ENCODE measurements at regions of chr5 and their contacts with region 1.

Region 1: DNA sequence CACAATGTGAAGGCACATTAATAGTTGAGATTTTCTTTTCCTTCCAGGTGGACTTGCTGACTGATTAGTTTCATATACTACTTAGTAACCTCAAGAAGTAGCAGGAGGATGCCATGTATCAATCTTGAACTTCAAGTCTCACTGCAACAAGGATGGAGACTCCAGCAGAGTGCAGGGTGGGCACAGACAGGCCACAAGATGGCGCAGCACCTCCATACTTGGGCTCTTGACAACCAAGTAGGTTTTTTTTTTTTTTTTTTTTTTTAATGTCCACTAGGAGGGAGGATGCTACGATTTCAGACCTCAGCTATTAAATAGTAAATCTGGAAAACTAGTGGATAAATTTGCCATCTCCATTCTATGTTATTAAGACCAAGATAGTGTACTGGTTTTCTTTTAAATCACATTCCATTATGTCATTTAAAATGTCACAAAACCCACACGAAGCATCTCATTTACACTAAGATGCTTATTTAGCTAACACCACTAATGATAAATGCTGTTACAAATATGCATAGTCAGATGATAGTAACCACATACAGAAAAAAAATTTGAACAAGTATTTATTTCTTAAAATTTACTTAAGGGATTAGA is 58.6 kb downstream of the IL6ST start:
- DNase-seq: peak; percentile 82
- H3K4me3 ChIP-seq: no peak overlapping the region
- H3K27ac ChIP-seq: no peak overlapping the region
- H3K27me3 ChIP-seq: no peaks in the 10 kb centered on the region
- CTCF ChIP-seq: peak; percentile 96

Region 2: GRCh38 chr5:55585206-55585610 is 351.0 kb before region 1 on chr5:
- CTCF ChIA-PET with region 1: interaction called, 10 read pairs
- POLR2A ChIA-PET with region 1: no interaction called
- DNase-seq: no peak
- H3K4me3 ChIP-seq: no peak overlapping the region
- H3K27ac ChIP-seq: no peak overlapping the region
- H3K27me3 ChIP-seq: no peaks in the 10 kb centered on the region
- CTCF ChIP-seq: no peak

Region 3: GRCh38 chr5:55908804-55909203 is 27.4 kb before region 1 on chr5:
- CTCF ChIA-PET with region 1: no interaction called
- POLR2A ChIA-PET with region 1: no interaction called
- DNase-seq: no peak
- H3K4me3 ChIP-seq: no peak overlapping the region
- H3K27ac ChIP-seq: no peak overlapping the region
- H3K27me3 ChIP-seq: no peaks in the 10 kb centered on the region
- CTCF ChIP-seq: no peak

Region 4: DNA sequence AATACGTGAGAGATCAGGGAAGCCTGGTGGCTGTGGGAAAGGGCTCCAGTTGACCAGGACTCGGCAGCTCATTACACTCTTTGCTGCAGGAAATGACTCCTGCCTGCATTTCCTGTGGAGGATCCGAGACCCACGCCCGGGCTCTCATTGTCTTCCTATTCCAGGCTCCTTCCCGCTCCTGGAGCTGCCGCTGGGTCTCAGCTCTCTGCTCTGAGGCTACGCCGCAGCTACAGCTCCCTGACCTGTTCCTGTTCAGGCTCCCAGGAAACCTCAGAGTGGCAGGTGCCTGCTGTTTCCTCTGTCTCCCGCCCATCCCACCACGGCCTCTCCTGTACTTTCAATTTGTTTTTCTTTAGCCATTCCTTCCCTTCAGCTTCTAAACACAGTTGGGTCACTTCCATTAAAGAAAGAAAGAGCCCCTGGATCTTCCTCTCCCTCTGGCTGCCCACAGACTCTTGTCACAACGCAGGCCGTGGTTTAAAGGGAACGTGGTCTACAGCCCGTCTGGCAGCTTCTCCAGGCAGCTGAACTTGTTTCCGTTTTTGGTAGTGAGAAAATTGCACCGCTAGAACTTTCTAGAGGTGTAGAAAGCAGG is 12.9 kb before region 1 on chr5:
- CTCF ChIA-PET with region 1: interaction called, 10 read pairs
- POLR2A ChIA-PET with region 1: no interaction called
- DNase-seq: no peak
- H3K4me3 ChIP-seq: no peak overlapping the region
- H3K27ac ChIP-seq: no peak overlapping the region
- H3K27me3 ChIP-seq: no peaks in the 10 kb centered on the region
- CTCF ChIP-seq: no peak

Region 5: GRCh38 chr5:56183506-56183905 is 247.3 kb after region 1 on chr5:
- CTCF ChIA-PET with region 1: no interaction called
- POLR2A ChIA-PET with region 1: no interaction called
- DNase-seq: peak; percentile 80
- H3K4me3 ChIP-seq: no peak overlapping the region
- H3K27ac ChIP-seq: no peak overlapping the region
- H3K27me3 ChIP-seq: no peaks in the 10 kb centered on the region
- CTCF ChIP-seq: no peak

Region 6: DNA sequence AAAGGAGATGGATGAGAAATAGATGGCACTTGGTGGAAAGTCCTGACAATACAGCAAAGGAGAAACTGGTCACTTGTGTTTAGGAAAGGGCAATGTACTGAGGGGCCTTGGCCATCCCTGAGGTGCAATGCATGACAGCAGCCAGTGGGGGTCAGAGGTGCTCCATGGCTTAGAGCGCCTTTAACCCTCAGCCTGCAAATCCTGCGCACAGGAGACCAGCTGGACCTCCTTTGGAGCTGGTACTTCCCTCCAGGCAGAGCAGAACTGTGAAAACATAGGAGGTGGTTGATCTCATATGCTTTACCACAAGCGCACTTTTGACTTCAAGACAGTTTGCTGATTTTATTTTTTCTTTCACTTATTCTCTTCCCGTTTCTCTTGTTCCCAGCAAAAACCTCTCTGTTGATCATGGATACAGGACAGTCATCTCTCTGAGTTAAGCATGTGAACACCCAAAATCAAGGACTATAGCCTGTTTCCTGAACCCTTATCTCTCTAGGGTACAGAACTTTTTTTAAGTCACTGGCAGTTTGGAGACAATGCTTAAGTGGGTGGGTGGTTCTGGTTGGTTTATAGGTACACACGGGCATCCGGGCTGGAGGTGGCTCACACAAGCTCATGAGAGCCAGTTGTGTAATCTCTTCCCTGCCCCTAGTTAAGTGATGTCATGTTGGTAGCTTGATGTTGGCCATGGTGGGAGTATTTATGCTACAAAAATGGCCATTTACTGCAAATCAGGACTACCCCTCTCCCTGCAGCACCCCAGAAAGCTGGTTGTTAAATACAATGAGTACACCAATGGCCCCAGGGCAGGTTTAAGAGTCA is 334.6 kb after region 1 on chr5:
- CTCF ChIA-PET with region 1: interaction called, 80 read pairs
- POLR2A ChIA-PET with region 1: no interaction called
- DNase-seq: peak; percentile 81
- H3K4me3 ChIP-seq: no peak overlapping the region
- H3K27ac ChIP-seq: no peak overlapping the region
- H3K27me3 ChIP-seq: no peaks in the 10 kb centered on the region
- CTCF ChIP-seq: peak; percentile 99

Region 7: GRCh38 chr5:56838409-56839039 is 902.3 kb after region 1 on chr5:
- CTCF ChIA-PET with region 1: interaction called, 18 read pairs
- POLR2A ChIA-PET with region 1: no interaction called
- DNase-seq: peak; percentile 26
- H3K4me3 ChIP-seq: peak overlapping the region; percentile 36
- H3K27ac ChIP-seq: no peak overlapping the region
- H3K27me3 ChIP-seq: no peaks in the 10 kb centered on the region
- CTCF ChIP-seq: peak; percentile 51